Heart left ventricle (tissue), 16 donors: ENCODE measurements at regions of chr4 and their contacts with region 1.

Region 1: GRCh38 chr4:122842984-122843531 is 16.4 kb downstream of the FGF2 start:
- DNase-seq: no peak
- ATAC-seq: peak in 3 of 4 donors; percentile 32 to 54 (median 50)
- H3K4me3 ChIP-seq: no peak overlapping the region
- H3K27ac ChIP-seq: peak overlapping the region in 2 of 12 donors; percentile 6 to 61
- H3K4me1 ChIP-seq: peaks cover 0 to 28% (median 5%) of the 10 kb centered on the region in 12 donors
- H3K27me3 ChIP-seq: no peaks in the 10 kb centered on the region
- CTCF ChIP-seq: no peak
- POLR2A ChIP-seq: no peak

Region 2: GRCh38 chr4:122728856-122729255 is 114.2 kb before region 1 on chr4:
- intact Hi-C with region 1: no loop called
- DNase-seq: no peak
- ATAC-seq: no peak
- H3K4me3 ChIP-seq: no peak overlapping the region
- H3K27ac ChIP-seq: no peak overlapping the region
- H3K4me1 ChIP-seq: peaks cover 0 to 17% (median 11%) of the 10 kb centered on the region in 12 donors
- H3K27me3 ChIP-seq: no peaks in the 10 kb centered on the region
- CTCF ChIP-seq: no peak
- POLR2A ChIP-seq: no peak

Region 3: GRCh38 chr4:122898370-122899150 is 55.5 kb after region 1 on chr4:
- intact Hi-C with region 1: loop called in 2 of 10 experiments (anchors 10 kb)
- DNase-seq: no peak
- ATAC-seq: peak in 1 of 4 donors; percentile 64
- H3K4me3 ChIP-seq: no peak overlapping the region
- H3K27ac ChIP-seq: no peak overlapping the region
- H3K4me1 ChIP-seq: peaks cover 0 to 6% (median 0%) of the 10 kb centered on the region in 12 donors
- H3K27me3 ChIP-seq: no peaks in the 10 kb centered on the region
- CTCF ChIP-seq: no peak
- POLR2A ChIP-seq: no peak